WTC11 (cell line): ENCODE measurements at regions of chr20 and their contacts with region 1.

Region 1: GRCh38 chr20:37396416-37397075 is 50.6 kb downstream of the SRC start:
- DNase-seq: peak; percentile 89
- ATAC-seq: peak; percentile 76
- H3K4me3 Mint-ChIP-seq: peak overlapping the region; percentile 65
- H3K27ac Mint-ChIP-seq: peak overlapping the region; percentile 99; the same call in 1 of the 2 replicates
- H3K4me1 Mint-ChIP-seq: peaks cover 33% of the 10 kb centered on the region
- H3K27me3 Mint-ChIP-seq: no peaks in the 10 kb centered on the region
- CTCF ChIP-seq: no peak

Region 2: DNA sequence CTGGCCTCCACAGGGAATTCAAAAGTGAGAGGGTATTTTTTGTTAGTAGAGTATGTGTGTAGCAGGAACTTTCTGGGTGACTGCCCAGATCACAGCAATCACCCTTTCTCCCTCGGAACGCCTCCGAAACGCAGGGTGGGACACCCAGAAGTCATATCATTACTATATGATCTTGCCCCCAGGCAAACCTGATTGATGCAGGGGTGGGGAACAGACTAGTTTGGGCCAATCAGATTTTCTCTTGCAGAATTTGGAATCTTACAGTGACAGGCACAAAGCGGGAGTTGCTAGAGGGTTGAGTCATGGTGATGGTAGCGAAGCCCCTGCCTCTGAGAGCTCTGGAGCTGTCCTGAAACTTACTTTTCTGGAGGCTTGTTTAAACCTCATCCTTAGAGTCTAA is 233.9 kb before region 1 on chr20:
- CTCF ChIA-PET with region 1: no interaction called
- POLR2A ChIA-PET with region 1: no interaction called
- DNase-seq: no peak
- ATAC-seq: no peak
- H3K4me3 Mint-ChIP-seq: no peak overlapping the region
- H3K27ac Mint-ChIP-seq: no peak overlapping the region
- H3K4me1 Mint-ChIP-seq: no peaks in the 10 kb centered on the region
- H3K27me3 Mint-ChIP-seq: no peaks in the 10 kb centered on the region
- CTCF ChIP-seq: no peak

Region 3: DNA sequence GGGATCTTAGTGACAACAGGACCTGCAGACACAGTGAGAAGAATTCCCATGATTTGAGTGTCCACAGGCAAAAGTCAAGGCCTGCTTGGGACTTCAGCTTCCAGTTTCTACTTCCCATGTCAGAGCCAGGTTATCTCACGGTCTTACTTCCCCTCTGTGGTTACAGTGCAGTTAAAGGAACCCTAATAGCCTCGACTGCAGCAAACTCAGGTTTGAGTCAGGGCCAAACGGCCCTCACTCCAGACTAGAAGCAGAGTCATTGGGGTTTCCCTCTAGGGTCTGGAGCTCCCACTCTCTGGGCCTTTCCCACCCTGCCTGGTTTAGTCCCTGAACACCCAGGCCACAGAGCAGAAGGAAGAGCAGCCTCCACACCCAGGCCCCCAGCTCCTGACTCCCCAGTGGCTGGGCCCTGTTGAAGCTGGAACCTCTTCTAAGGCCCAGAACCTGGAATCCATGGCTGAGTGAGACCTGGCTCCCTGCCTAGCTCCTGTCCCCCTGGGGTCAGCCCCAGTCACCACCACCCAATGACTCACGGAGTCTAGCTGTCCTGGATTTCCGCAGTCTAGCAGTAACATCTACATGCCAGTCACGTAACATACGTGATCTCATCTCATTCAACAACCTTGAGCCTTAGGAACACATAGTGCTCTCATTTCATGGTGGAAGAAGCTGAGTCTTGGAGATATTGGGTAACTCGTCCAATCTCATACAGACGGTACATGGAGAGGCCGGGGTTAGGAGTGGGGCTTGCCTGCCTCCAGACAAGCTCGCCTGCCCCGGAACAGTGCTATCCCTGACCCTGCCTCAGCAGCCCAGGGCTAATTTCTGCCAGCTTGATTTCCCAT is 125.7 kb before region 1 on chr20:
- CTCF ChIA-PET with region 1: interaction called, 21 read pairs
- POLR2A ChIA-PET with region 1: interaction called, 3 read pairs
- DNase-seq: no peak
- ATAC-seq: no peak
- H3K4me3 Mint-ChIP-seq: no peak overlapping the region
- H3K27ac Mint-ChIP-seq: no peak overlapping the region
- H3K4me1 Mint-ChIP-seq: peaks cover 39% of the 10 kb centered on the region
- H3K27me3 Mint-ChIP-seq: no peaks in the 10 kb centered on the region; the same call in 1 of the 2 replicates
- CTCF ChIP-seq: no peak

Region 4: DNA sequence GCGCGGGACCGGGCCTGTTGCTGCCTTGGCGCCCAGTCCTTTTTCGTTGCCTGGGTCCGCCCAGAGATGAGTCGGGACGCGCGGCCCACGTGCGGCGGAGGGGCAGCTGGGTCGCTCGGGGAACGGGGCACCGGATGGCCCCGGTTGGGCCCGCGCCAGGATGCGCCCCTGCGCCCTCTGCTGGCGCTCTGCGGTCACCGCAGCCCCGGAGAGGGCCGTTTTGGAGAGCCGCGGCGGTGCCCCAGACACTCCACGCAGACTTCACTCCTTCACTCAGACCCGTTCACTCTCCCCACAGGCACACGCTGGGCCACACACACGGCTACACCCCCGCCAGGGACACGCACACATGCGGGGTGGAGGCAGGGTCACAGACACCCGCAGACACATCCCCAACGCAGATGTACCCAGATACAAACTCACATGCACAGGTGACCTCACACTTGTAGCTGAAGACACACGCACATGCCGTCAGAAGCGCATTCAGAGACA is 11.8 kb before region 1 on chr20:
- CTCF ChIA-PET with region 1: interaction called, 41 read pairs
- POLR2A ChIA-PET with region 1: interaction called, 4 read pairs
- DNase-seq: peak; percentile 82
- ATAC-seq: peak; percentile 79
- H3K4me3 Mint-ChIP-seq: peak overlapping the region; percentile 72
- H3K27ac Mint-ChIP-seq: peak overlapping the region; percentile 68
- H3K4me1 Mint-ChIP-seq: peaks cover 4% of the 10 kb centered on the region
- H3K27me3 Mint-ChIP-seq: no peaks in the 10 kb centered on the region
- CTCF ChIP-seq: peak; percentile 97

Region 5: GRCh38 chr20:37501940-37502339 is 105.4 kb after region 1 on chr20:
- CTCF ChIA-PET with region 1: interaction called, 20 read pairs
- POLR2A ChIA-PET with region 1: no interaction called
- DNase-seq: peak; percentile 44
- ATAC-seq: peak; percentile 83
- H3K4me3 Mint-ChIP-seq: no peak overlapping the region
- H3K27ac Mint-ChIP-seq: no peak overlapping the region
- H3K4me1 Mint-ChIP-seq: 0 out of 2 replicates have a peak, but pooled peaks cover 2% of the 10 kb centered on the region
- H3K27me3 Mint-ChIP-seq: no peaks in the 10 kb centered on the region
- CTCF ChIP-seq: no peak

Region 6: GRCh38 chr20:37527638-37528441 is 131.3 kb after region 1 on chr20 and contains the start of gene BLCAP:
- CTCF ChIA-PET with region 1: interaction called, 28 read pairs
- POLR2A ChIA-PET with region 1: interaction called, 8 read pairs
- DNase-seq: peak; percentile 92
- ATAC-seq: peak; percentile 63
- H3K4me3 Mint-ChIP-seq: peak within 1 kb of the TSS; percentile 87
- H3K27ac Mint-ChIP-seq: peak within 1 kb of the TSS; percentile 100
- H3K4me1 Mint-ChIP-seq: peaks cover 49% of the 10 kb centered on the region
- H3K27me3 Mint-ChIP-seq: no peaks in the 10 kb centered on the region; the same call in 1 of the 2 replicates
- CTCF ChIP-seq: no peak
- total RNA-seq, gene BLCAP: 53.5 to 85.6 TPM (median 54.4 TPM) in 3 replicates